ENCODE measurements at regions of chr6 and their contacts with region 1.

Region 1: GRCh38 chr6:169789982-169790927 is 38.8 kb downstream of the ERMARD start:
- DNase-seq: no peak
- H3K4me3 ChIP-seq: peak overlapping the region; percentile 58
- H3K27ac ChIP-seq: peak overlapping the region; percentile 75
- H3K27me3 ChIP-seq: peaks cover 10% of the 10 kb centered on the region
- CTCF ChIP-seq: peak; percentile 99

Region 2: GRCh38 chr6:169800668-169801395 is 10.6 kb after region 1 on chr6:
- CTCF ChIA-PET with region 1: interaction called, 30 read pairs
- POLR2A ChIA-PET with region 1: interaction called, 5 read pairs
- DNase-seq: peak; percentile 45
- H3K4me3 ChIP-seq: no peak overlapping the region
- H3K27ac ChIP-seq: peak overlapping the region; percentile 39
- H3K27me3 ChIP-seq: peaks cover 8% of the 10 kb centered on the region
- CTCF ChIP-seq: no peak

Region 3: GRCh38 chr6:169959136-169960002 is 169.1 kb after region 1 on chr6:
- CTCF ChIA-PET with region 1: no interaction called
- POLR2A ChIA-PET with region 1: no interaction called
- DNase-seq: no peak
- H3K4me3 ChIP-seq: no peak overlapping the region
- H3K27ac ChIP-seq: no peak overlapping the region
- H3K27me3 ChIP-seq: no peaks in the 10 kb centered on the region
- CTCF ChIP-seq: no peak

Region 4: DNA sequence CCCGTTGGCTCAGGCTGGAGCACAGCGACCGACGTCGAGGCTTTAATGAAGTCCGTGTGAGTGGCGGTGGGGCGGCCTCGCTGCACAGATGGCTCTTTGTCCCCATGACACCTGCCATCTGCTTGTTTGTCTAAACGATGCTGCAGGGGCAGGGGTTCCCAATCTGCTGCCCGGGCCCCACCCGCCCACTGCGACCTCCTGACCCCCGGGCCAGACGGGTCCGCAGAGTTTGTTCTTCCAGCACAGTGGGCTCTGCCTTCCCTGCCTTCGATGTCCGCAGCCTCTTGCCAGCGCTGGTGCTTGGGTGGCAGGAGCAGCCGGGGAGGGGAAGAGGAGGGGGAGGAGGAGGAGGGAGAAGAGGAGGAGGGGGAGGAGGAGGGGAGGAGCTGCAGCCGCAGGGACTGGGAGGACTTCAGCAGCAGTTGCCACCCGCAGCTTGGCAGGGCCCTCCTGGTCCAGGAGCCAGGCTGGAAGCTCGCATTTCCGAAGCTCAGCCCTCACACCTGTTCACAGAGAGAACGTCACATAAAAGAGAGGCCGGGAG is 290.6 kb after region 1 on chr6:
- CTCF ChIA-PET with region 1: no interaction called
- POLR2A ChIA-PET with region 1: no interaction called
- DNase-seq: no peak
- H3K4me3 ChIP-seq: no peak overlapping the region
- H3K27ac ChIP-seq: no peak overlapping the region
- H3K27me3 ChIP-seq: no peaks in the 10 kb centered on the region
- CTCF ChIP-seq: no peak

Region 5: DNA sequence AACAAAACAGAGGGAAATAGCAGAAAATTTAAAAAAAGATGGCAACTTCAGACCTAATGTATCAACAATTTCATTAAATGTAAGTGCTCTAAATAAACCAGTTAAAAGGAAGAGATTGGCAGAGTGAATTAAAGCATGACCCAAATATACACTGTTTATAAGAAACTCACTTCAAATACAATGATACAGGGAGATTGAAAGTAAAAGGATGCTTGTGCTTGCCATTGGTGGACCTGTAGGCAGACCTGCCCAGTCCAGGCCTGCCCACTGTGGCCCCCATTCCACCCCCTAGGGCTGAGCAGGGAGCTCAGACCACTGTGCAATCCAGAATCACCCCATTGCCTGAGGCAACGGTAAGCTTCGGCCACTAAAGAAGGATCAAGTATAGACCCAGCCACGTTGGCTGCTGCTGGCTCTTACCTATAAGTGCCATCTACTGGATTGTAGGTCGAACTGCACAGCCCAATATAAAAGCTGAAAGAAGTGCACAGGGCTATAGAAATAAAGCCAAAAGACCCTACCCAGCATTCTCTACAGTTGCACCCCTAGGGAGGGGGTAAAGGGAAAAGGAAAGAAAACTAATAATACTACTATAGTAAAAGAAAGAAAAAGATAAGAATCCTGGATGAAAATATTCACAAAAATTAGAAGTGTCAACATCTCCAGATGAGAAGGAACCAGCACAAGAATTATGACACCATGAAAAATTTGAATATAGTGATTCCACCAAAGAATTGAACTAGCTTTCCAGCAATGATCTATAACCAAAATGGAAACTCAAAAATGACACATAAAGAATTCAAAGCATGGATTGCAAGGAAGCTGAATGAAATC is 726.7 kb after region 1 on chr6:
- CTCF ChIA-PET with region 1: interaction called, 32 read pairs
- POLR2A ChIA-PET with region 1: no interaction called
- DNase-seq: peak; percentile 52
- H3K4me3 ChIP-seq: no peak overlapping the region
- H3K27ac ChIP-seq: no peak overlapping the region
- H3K27me3 ChIP-seq: no peaks in the 10 kb centered on the region
- CTCF ChIP-seq: peak; percentile 93

Region 6: DNA sequence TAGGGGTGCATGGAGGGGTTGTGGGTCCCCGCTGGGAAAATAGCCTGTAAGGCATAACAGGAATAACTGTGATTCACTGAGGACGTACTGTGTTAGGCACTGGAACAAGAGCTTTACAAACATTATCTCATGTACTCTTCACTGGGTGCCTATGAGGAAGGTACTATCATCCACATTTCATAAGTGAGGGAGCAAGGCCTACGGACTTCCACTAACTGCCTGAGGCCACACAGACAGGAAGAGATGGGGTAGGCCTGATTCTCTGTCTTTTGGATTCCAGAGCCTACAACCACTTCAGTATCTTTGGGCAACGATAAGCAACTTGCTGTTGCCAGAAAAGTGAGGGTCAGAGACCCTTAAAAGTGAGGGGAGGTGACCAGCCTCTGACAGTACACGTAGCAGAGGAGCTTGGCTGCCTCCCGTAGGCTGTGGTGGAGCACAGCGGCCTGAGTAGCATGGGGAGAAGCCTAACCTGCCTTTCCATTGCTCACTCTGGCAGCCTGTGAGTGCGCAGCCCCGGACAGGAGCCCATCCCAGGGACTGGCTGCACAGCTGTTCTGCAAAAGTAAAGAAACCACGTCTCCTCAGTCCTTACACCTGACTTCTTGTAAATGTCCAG is 732.4 kb after region 1 on chr6:
- CTCF ChIA-PET with region 1: interaction called, 59 read pairs
- POLR2A ChIA-PET with region 1: no interaction called
- DNase-seq: no peak
- H3K4me3 ChIP-seq: no peak overlapping the region
- H3K27ac ChIP-seq: no peak overlapping the region
- H3K27me3 ChIP-seq: no peaks in the 10 kb centered on the region
- CTCF ChIP-seq: peak; percentile 30; the same call in 1 of the 2 replicates

Region 7: GRCh38 chr6:170545405-170545804 is 755.1 kb after region 1 on chr6:
- CTCF ChIA-PET with region 1: interaction called, 10 read pairs
- POLR2A ChIA-PET with region 1: no interaction called
- DNase-seq: peak; percentile 44
- H3K4me3 ChIP-seq: no peak overlapping the region
- H3K27ac ChIP-seq: peak overlapping the region; percentile 22
- H3K27me3 ChIP-seq: no peaks in the 10 kb centered on the region
- CTCF ChIP-seq: no peak

Measured in AG04450 (cell line).